Heart left ventricle (tissue), 16 donors: ENCODE measurements at regions of chr18 and their contacts with region 1.

Region 1: GRCh38 chr18:25921677-25922421 is 168.6 kb downstream of the SS18 start:
- DNase-seq: no peak
- ATAC-seq: no peak
- H3K4me3 ChIP-seq: no peak overlapping the region
- H3K27ac ChIP-seq: no peak overlapping the region
- H3K4me1 ChIP-seq: no peaks in the 10 kb centered on the region
- H3K27me3 ChIP-seq: no peaks in the 10 kb centered on the region
- CTCF ChIP-seq: peak in 11 of 12 donors; percentile 10 to 45 (median 35)
- POLR2A ChIP-seq: no peak

Region 2: DNA sequence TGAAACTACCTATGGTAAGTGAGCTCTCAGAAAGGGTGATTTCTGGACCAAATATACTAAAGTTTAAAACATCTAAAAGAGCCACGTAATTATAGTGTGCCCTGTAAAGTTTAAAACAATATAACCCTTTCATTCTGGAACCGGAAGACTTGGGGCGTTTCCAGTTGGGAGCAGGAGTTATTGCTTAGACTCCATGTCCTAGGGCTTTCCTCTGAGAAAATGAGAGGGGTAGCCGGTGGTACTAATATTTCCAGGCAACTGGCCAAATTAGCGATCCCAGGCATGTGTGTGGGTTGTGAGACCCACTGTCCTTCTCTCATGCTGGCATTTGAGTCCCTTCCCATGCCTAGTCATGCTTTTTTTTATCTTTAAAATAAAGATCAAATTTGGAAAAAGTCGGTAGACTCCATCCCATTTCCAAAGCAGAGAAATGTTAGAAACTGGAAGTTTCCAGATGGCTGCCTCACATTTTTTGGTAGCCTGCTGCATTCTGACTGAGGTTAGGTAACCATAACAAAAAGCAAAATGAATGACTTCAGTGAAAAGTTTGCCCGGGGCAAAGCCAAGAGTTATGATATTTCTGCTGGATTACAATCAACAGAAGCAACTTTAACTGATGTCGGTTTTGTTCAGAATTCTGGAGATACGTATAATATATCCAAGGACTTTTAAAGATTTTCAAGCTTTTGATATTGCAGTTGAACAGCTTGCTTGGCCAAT is 58.8 kb before region 1 on chr18:
- intact Hi-C with region 1: loop called in 1 of 10 experiments (anchors 10 kb)
- DNase-seq: no peak
- ATAC-seq: no peak
- H3K4me3 ChIP-seq: no peak overlapping the region
- H3K27ac ChIP-seq: no peak overlapping the region
- H3K4me1 ChIP-seq: no peaks in the 10 kb centered on the region
- H3K27me3 ChIP-seq: peaks cover 0 to 9% (median 0%) of the 10 kb centered on the region in 9 donors
- CTCF ChIP-seq: no peak
- POLR2A ChIP-seq: no peak

Region 3: GRCh38 chr18:26133652-26134051 is 211.8 kb after region 1 on chr18 and contains the start of gene PSMA8:
- intact Hi-C with region 1: no loop called
- DNase-seq: peak; percentile 12 to 70 (median 23)
- ATAC-seq: peak in 3 of 4 donors; percentile 33 to 54 (median 50)
- H3K4me3 ChIP-seq: peak within 1 kb of the TSS in 10 of 12 donors; percentile 0 to 34 (median 20)
- H3K27ac ChIP-seq: no peak within 1 kb of the TSS
- H3K4me1 ChIP-seq: no peaks in the 10 kb centered on the region
- H3K27me3 ChIP-seq: no peaks in the 10 kb centered on the region
- CTCF ChIP-seq: no peak
- POLR2A ChIP-seq: no peak
- total RNA-seq, gene PSMA8: 0.16 TPM in 1 of 9 donors, not detected in the others

Region 4: DNA sequence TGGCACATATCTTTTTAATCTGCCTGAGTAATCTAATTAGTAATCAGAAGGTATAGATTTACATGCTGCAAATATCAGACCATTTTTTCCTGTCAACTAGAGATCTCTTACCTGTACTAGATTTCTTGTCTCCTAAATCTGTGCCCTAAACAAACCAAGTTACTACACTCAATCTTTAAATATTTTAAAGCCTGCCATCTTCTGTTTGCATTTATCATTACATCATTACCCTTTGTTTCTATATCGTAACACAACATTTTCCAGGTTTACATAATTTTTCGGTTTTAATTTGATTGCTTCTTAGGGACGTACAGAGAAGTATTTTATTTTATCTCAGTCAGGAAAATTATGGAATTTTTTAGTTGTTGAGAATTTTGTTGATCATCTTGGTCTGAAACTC is 237.5 kb after region 1 on chr18:
- intact Hi-C with region 1: loop called in 1 of 10 experiments (anchors 10 kb)
- DNase-seq: no peak
- ATAC-seq: no peak
- H3K4me3 ChIP-seq: no peak overlapping the region
- H3K27ac ChIP-seq: no peak overlapping the region
- H3K4me1 ChIP-seq: no peaks in the 10 kb centered on the region
- H3K27me3 ChIP-seq: no peaks in the 10 kb centered on the region
- CTCF ChIP-seq: peak in 4 of 12 donors; percentile 22 to 29 (median 24)
- POLR2A ChIP-seq: no peak